Activated CD4-positive, alpha-beta T cell treated with anti-CD3 and anti-CD28 coated beads, Interleukin-2, amount 10 ng/mL, durations not matched to agents 24 days and 14 days (primary cell): ENCODE measurements at regions of chr13 and their contacts with region 1.

Region 1: DNA sequence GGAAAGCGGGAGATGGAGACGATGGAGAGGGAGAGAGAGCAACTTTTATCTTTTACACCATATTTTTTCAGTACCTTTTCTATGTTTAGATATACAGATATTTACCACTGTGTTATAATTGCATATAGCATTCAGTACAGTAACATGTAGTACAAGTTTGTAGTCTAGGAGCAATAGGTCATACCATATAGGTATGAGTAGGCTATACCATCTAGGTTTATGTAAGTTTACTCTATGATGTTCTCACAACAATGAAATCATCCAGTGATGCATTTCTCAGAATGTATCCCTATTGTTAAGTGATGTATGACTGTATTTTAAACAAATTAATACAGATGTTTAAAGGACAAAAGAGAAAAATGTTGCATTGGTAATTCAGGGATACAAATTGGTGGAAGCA is 136.1 kb downstream of the PDS5B start:
- DNase-seq: no peak
- H3K4me3 Mint-ChIP-seq: no peak overlapping the region
- H3K27ac Mint-ChIP-seq: no peak overlapping the region
- H3K4me1 Mint-ChIP-seq: peaks cover 6% of the 10 kb centered on the region
- H3K27me3 Mint-ChIP-seq: no peaks in the 10 kb centered on the region

Region 2: GRCh38 chr13:32737111-32737571 is 14.8 kb after region 1 on chr13:
- intact Hi-C with region 1: loop called (anchors 1 kb)
- DNase-seq: peak; percentile 73
- H3K4me3 Mint-ChIP-seq: peak overlapping the region; percentile 82
- H3K27ac Mint-ChIP-seq: peak overlapping the region; percentile 81
- H3K4me1 Mint-ChIP-seq: peaks cover 31% of the 10 kb centered on the region
- H3K27me3 Mint-ChIP-seq: no peaks in the 10 kb centered on the region